Mammary epithelial cell (primary cell): ENCODE measurements at regions of chr15 and their contacts with region 1.

Region 1: GRCh38 chr15:75143738-75144334 is 57.8 kb upstream of the C15orf39 start:
- DNase-seq: no peak
- H3K4me3 ChIP-seq: no peak overlapping the region
- H3K27ac ChIP-seq: no peak overlapping the region
- H3K4me1 ChIP-seq: peaks cover 8% of the 10 kb centered on the region
- H3K27me3 ChIP-seq: no peaks in the 10 kb centered on the region
- CTCF ChIP-seq: no peak

Region 2: DNA sequence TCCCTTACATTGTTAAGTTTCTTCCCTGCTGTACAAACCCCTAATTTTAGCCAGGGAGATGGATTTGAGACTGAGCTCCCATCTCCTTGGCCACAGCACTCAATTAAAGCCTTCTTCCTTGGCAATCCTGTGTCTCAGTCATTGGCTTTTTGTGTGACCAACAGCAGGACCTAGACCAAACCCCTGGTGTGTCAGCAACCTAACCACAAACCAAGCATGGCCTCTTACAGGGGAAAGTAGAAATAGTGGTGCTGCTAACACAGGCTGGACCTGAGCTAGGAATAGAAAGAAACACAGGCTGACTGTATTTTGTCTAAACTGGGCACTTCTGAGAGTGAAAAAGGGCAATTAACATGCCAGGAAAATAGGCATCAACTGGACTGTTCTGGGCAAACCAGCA is 82.6 kb before region 1 on chr15:
- CTCF ChIA-PET with region 1: no interaction called
- dilution Hi-C with region 1: loop called (anchors 5 kb)
- in situ Hi-C with region 1: no loop called
- intact Hi-C with region 1: no loop called
- DNase-seq: peak; percentile 52
- H3K4me3 ChIP-seq: no peak overlapping the region
- H3K27ac ChIP-seq: no peak overlapping the region
- H3K4me1 ChIP-seq: peaks cover 30% of the 10 kb centered on the region
- H3K27me3 ChIP-seq: no peaks in the 10 kb centered on the region
- CTCF ChIP-seq: no peak